Spleen (tissue), 13 donors: ENCODE measurements at regions of chr2 and their contacts with region 1.

Region 1: GRCh38 chr2:191030521-191031154 is 16.7 kb upstream of the STAT1 start:
- DNase-seq: no peak
- H3K4me3 ChIP-seq: peak overlapping the region in 1 of 8 donors; percentile 33
- H3K27ac ChIP-seq: peak overlapping the region in 4 of 8 donors; percentile 40 to 68 (median 55)
- H3K4me1 ChIP-seq: peaks cover 8 to 57% (median 33%) of the 10 kb centered on the region in 6 donors
- H3K27me3 ChIP-seq: no peaks in the 10 kb centered on the region
- CTCF ChIP-seq: peak; percentile 33 to 72 (median 65)
- POLR2A ChIP-seq: no peak

Region 2: DNA sequence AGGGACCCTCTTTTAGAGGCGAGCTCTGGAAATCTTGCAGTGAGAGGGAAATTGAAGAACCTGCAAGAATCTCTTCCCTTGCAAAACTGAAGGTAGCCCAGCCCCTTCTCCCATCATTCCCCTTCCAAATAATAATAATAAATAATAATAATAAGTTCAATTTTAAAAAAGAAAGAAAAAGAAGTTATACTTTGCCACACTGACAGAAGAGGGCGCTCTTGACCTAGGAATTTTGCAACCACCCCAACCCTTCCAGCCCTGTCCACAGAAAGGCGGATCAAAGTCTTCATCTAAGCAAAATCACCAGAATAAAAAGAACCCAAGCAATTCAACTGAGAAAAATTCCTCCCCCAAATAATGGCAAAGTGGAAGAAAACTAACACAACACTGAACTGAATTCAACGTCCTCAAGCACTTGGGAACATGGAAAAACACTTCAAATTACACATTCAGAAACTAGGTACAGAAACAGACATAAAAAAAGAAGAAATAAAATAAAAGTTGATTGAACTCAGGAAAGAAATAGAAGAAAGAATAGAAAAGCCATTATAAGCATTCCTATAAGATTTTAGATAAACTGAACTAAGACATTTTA is 248.9 kb before region 1 on chr2:
- intact Hi-C with region 1: loop called (anchors 10 kb)
- DNase-seq: no peak
- H3K4me3 ChIP-seq: no peak overlapping the region
- H3K27ac ChIP-seq: no peak overlapping the region
- H3K4me1 ChIP-seq: peaks cover 0 to 3% (median 0%) of the 10 kb centered on the region in 6 donors
- H3K27me3 ChIP-seq: peaks cover 0 to 10% (median 0%) of the 10 kb centered on the region in 7 donors
- CTCF ChIP-seq: peak in 10 of 11 experiments; percentile 15 to 66 (median 52)
- POLR2A ChIP-seq: no peak